H1 (cell line): ENCODE measurements at regions of chr6 and their contacts with region 1.

Region 1: GRCh38 chr6:75334266-75335040 is 49.9 kb upstream of the TMEM30A start:
- DNase-seq: peak; percentile 59 to 82
- H3K4me3 ChIP-seq: peak overlapping the region; percentile 6 to 53 (median 26); a peak in 6 of 8 replicates
- H3K27ac ChIP-seq: peak overlapping the region; percentile 87
- H3K4me1 ChIP-seq: peaks cover 0 to 24% (median 12%) of the 10 kb centered on the region in 4 experiments; a peak in 5 of 7 replicates
- H3K27me3 ChIP-seq: no peaks in the 10 kb centered on the region
- CTCF ChIP-seq: no peak
- EP300 ChIP-seq: peak; percentile 49 to 99
- POLR2A ChIP-seq: peak; percentile 29 to 79
- RAD21 ChIP-seq: 0 out of 4 replicates have a peak, but pooled peaks of 1 of the 2 experiments have one; percentile 15

Region 2: DNA sequence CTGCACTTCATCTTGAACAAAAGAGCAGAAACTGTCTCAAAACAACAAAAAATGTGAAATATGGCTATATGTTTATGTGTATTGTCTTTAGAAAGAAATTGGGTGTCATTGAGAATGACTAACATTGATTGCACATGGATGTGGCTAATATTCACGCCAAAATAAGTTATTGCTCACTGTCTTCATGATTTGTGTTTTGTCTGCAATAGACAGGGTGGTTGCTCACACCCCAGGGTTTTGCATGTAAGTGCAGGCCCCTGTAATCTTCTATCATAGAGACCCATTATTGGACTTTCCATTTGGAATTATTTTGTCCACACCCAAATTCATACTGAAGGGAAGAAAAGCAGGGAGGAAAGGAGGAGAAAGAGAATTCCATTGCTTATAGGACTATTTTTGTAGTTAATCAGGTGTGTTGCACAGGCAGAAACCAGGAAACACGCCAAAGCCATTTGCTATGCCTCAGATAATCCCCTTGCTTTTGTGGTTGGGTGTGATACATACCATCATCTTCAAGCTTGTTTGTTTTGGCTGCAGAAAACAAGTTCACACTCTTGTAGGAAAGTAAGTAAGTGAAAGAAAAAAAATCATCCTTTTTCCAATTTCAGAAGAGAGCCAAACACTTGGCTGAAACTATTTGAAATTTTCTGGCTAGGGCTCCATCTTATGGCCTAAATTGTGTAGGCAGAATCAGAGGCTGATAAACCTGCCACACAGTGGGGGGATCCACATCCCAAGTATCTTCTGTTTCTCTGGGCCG is 342.7 kb before region 1 on chr6:
- CTCF ChIA-PET with region 1: no interaction called
- POLR2A ChIA-PET with region 1: no interaction called
- DNase-seq: no peak
- H3K4me3 ChIP-seq: no peak overlapping the region
- H3K27ac ChIP-seq: no peak overlapping the region
- H3K4me1 ChIP-seq: no peaks in the 10 kb centered on the region
- H3K27me3 ChIP-seq: no peaks in the 10 kb centered on the region
- CTCF ChIP-seq: peak in 1 of 3 experiments; percentile 11; a peak in 1 of 4 replicates
- EP300 ChIP-seq: no peak
- POLR2A ChIP-seq: no peak
- RAD21 ChIP-seq: peak in 1 of 2 experiments; percentile 30; a peak in 2 of 4 replicates

Region 3: DNA sequence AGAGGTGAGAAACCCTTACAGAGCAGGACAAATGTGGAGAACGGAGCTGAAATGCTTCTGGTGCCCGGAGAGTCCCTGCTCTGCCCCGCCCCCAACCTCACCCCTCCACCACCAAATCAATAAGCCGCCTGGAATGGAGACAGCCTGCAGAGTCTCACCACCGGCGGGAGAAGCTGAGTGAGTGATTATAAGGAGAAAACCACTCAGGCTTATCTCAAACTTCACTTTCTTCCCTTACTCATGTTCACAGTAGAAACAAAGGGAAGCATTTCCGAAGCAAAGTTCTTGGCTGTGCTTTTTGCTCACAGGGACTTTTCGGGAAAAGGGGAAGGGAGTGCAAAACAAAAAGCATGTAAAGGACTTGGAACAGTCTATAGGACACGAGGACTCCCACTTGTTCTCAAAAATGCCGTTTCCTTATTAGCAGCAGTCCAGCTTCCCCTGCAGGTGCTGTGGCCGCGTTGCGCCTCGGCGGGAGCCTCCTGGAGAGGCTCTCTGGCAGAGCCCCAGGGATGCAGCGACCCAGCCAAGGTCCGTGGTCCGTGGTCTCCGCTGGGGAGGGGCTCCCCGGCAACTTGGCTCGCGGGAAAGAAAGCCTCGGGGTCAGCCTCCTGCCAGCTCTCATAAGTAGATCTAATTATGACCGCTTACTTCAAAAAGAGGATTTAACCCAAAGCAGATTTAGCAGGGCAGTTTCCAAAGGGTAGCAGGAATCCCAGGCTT is 15.0 kb after region 1 on chr6:
- CTCF ChIA-PET with region 1: interaction called, 3 read pairs
- POLR2A ChIA-PET with region 1: interaction called, 14 read pairs
- DNase-seq: peak in 1 of 2 experiments; percentile 77
- H3K4me3 ChIP-seq: peak overlapping the region; percentile 57 to 67 (median 65)
- H3K27ac ChIP-seq: peak overlapping the region; percentile 61
- H3K4me1 ChIP-seq: peaks cover 0 to 6% (median 4%) of the 10 kb centered on the region in 4 experiments; a peak in 4 of 7 replicates
- H3K27me3 ChIP-seq: no peaks in the 10 kb centered on the region
- CTCF ChIP-seq: no peak; a peak in 1 of 4 replicates
- EP300 ChIP-seq: no peak; a peak in 1 of 3 replicates
- POLR2A ChIP-seq: peak; percentile 42 to 77
- RAD21 ChIP-seq: peak; percentile 18 to 42; a peak in 3 of 4 replicates